Ascending aorta (tissue), 2 donors: ENCODE measurements at regions of chr2 and their contacts with region 1.

Region 1: DNA sequence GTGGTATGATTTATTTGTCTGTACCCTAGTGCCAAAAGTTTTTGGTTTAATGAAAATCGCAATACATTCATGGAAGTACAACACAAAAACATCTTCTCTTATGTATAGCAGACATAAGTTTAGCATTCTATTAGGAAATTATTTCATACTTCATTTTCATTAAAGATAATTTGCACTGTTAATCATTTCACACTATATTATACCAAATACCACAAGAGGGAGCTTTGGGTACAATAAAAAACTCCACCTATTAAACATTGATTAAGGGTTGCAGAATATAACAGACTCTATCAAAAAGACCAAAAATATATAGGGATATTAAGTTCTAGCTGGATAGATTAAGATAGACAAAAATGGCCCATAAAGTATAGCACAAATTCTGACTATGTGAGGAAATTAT is 79.0 kb downstream of the SLC66A3 start:
- DNase-seq: no peak
- H3K4me3 ChIP-seq: no peak overlapping the region
- H3K27ac ChIP-seq: no peak overlapping the region
- H3K4me1 ChIP-seq: peaks cover 0 to 14% of the 10 kb centered on the region in 2 donors
- H3K27me3 ChIP-seq: no peaks in the 10 kb centered on the region
- CTCF ChIP-seq: peak; percentile 22 to 64 (median 34)

Region 2: DNA sequence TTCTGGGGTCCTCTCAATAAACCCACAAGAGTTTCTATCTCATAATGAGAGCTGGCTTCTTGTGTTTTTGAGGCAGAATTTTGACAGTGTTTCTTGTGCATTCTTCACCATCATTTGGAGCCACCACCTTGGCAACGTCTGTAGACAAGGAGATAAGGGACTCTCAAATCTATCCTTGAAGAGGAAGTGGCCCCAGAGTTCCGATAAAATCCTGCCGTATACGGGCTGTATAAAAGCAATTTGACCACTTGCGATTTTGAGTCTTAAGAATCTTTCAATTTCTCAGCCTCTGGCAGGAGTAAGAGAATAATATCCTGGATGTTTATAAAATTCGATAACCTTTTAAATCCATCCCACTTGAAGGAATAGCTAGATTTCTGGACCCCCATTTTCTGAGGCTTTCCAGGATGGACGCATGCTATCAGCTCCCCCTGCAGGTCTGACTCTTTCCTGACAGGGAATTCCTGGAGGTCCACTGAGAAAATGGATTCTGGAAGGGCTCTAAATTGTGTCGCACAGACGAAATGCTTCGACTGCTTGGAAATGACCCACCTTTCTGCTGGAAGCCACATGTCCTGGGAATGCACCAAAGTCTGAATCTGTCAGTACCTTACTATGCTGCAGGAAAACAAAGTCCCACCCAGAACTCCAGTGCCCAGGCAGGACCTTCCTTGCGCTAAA is 177.6 kb after region 1 on chr2:
- intact Hi-C with region 1: loop called (anchors 1 kb)
- DNase-seq: peak in 1 of 2 donors; percentile 79
- H3K4me3 ChIP-seq: peak overlapping the region; percentile 44 to 59
- H3K27ac ChIP-seq: no peak overlapping the region
- H3K4me1 ChIP-seq: peaks cover 4 to 16% of the 10 kb centered on the region in 2 donors
- H3K27me3 ChIP-seq: no peaks in the 10 kb centered on the region
- CTCF ChIP-seq: peak; percentile 62 to 96 (median 83)

Region 3: GRCh38 chr2:11527001-11527400 is 292.7 kb after region 1 on chr2:
- intact Hi-C with region 1: no loop called
- DNase-seq: no peak
- H3K4me3 ChIP-seq: no peak overlapping the region
- H3K27ac ChIP-seq: no peak overlapping the region
- H3K4me1 ChIP-seq: no peaks in the 10 kb centered on the region
- H3K27me3 ChIP-seq: no peaks in the 10 kb centered on the region
- CTCF ChIP-seq: no peak